WTC11 (cell line): ENCODE measurements at regions of chr1 and their contacts with region 1.

Region 1: DNA sequence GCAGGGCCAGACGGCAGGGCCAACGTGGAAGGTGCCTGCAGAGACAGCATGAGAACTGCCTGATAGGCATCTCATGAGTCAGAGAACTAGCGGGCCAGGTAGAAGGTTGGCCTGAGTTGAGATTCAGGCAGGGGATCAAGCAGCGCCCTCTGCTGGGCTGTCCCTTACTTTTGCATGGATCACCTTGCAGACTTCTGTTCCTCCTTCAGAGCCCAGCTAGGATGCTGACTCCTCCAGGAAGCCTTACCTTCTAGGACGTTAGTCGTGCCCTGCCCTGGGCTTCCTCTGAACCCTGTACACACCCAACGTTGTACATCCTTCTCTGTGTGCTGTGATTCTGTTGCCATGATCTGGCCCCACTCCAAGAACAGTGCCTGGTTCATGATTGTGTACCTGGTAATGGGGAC is 231.3 kb upstream of the VAMP3 start:
- DNase-seq: peak; percentile 88
- ATAC-seq: peak; percentile 62
- H3K4me3 Mint-ChIP-seq: no peak overlapping the region
- H3K27ac Mint-ChIP-seq: no peak overlapping the region
- H3K4me1 Mint-ChIP-seq: peaks cover 50% of the 10 kb centered on the region
- H3K27me3 Mint-ChIP-seq: peaks cover 8% of the 10 kb centered on the region; the same call in 1 of the 2 replicates
- CTCF ChIP-seq: peak; percentile 70

Region 2: GRCh38 chr1:7454052-7454815 is 85.5 kb before region 1 on chr1:
- CTCF ChIA-PET with region 1: interaction called, 13 read pairs
- POLR2A ChIA-PET with region 1: no interaction called
- DNase-seq: peak; percentile 38
- ATAC-seq: peak; percentile 17; the same call in 1 of the 2 replicates
- H3K4me3 Mint-ChIP-seq: no peak overlapping the region
- H3K27ac Mint-ChIP-seq: no peak overlapping the region
- H3K4me1 Mint-ChIP-seq: peaks cover 36% of the 10 kb centered on the region
- H3K27me3 Mint-ChIP-seq: no peaks in the 10 kb centered on the region
- CTCF ChIP-seq: no peak

Region 3: GRCh38 chr1:7580923-7581753 is 41.4 kb after region 1 on chr1:
- CTCF ChIA-PET with region 1: no interaction called
- POLR2A ChIA-PET with region 1: no interaction called
- DNase-seq: no peak
- ATAC-seq: no peak
- H3K4me3 Mint-ChIP-seq: no peak overlapping the region
- H3K27ac Mint-ChIP-seq: no peak overlapping the region
- H3K4me1 Mint-ChIP-seq: no peaks in the 10 kb centered on the region
- H3K27me3 Mint-ChIP-seq: no peaks in the 10 kb centered on the region
- CTCF ChIP-seq: no peak